ENCODE measurements at regions of chr9 and their contacts with region 1.

Region 1: GRCh38 chr9:86413966-86414880 is 60.0 kb upstream of the TUT7 start:
- DNase-seq: no peak
- ATAC-seq: no peak
- H3K4me3 Mint-ChIP-seq: no peak overlapping the region
- H3K27ac Mint-ChIP-seq: no peak overlapping the region
- H3K4me1 Mint-ChIP-seq: no peaks in the 10 kb centered on the region
- H3K27me3 Mint-ChIP-seq: peaks cover 14% of the 10 kb centered on the region

Region 2: GRCh38 chr9:85740787-85741094 is 673.5 kb before region 1 on chr9:
- CTCF ChIA-PET with region 1: no interaction called
- POLR2A ChIA-PET with region 1: no interaction called
- intact Hi-C with region 1: no loop called
- DNase-seq: no peak
- ATAC-seq: no peak
- H3K4me3 Mint-ChIP-seq: peak overlapping the region; percentile 86
- H3K27ac Mint-ChIP-seq: peak overlapping the region; percentile 96
- H3K4me1 Mint-ChIP-seq: peaks cover 38% of the 10 kb centered on the region
- H3K27me3 Mint-ChIP-seq: peaks cover 2% of the 10 kb centered on the region

Region 3: GRCh38 chr9:86424251-86424891 is 10.1 kb after region 1 on chr9:
- CTCF ChIA-PET with region 1: interaction called, 11 read pairs
- POLR2A ChIA-PET with region 1: no interaction called
- intact Hi-C with region 1: no loop called
- DNase-seq: no peak
- ATAC-seq: no peak
- H3K4me3 Mint-ChIP-seq: no peak overlapping the region
- H3K27ac Mint-ChIP-seq: no peak overlapping the region
- H3K4me1 Mint-ChIP-seq: no peaks in the 10 kb centered on the region
- H3K27me3 Mint-ChIP-seq: peaks cover 8% of the 10 kb centered on the region

Region 4: DNA sequence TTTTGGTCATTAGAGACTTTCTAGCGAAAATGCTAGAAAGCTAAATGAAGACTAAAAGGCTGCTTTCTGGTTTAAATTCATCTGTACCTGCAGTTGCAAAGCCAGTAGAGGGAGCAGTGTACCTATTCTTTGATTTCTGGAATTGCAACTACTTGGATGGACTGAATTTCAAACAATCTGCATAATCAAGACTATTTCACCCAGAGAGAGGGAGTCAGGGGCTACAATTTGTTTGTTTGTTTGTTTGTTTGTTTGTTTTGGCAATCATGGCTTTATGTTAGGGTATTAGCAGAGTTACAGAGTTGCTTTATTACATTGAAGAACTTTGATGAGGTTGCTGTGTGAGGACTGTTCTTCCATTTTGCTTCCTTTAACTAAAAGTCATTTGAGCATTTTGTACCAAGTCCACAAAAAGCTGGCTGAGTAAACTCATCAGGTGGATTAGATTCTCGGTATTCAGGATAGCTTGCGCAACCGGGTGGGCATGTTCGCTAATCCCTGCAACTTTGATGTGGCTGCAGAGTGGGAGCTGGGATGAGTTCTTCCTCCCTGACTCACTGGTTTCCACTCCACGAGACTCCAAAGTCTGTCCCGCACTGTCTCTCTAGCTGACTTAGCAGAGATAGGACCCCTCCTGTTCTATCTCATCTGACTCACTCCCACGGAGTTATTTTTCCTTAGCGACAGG is 20.0 kb after region 1 on chr9:
- CTCF ChIA-PET with region 1: interaction called, 13 read pairs
- POLR2A ChIA-PET with region 1: no interaction called
- intact Hi-C with region 1: no loop called
- DNase-seq: no peak
- ATAC-seq: no peak
- H3K4me3 Mint-ChIP-seq: no peak overlapping the region
- H3K27ac Mint-ChIP-seq: no peak overlapping the region
- H3K4me1 Mint-ChIP-seq: no peaks in the 10 kb centered on the region
- H3K27me3 Mint-ChIP-seq: peaks cover 13% of the 10 kb centered on the region

Region 5: GRCh38 chr9:86486891-86487837 is 72.9 kb after region 1 on chr9:
- CTCF ChIA-PET with region 1: interaction called, 3 read pairs
- POLR2A ChIA-PET with region 1: no interaction called
- intact Hi-C with region 1: loop called in 1 of 2 experiments (anchors 5 kb)
- DNase-seq: no peak
- ATAC-seq: no peak
- H3K4me3 Mint-ChIP-seq: no peak overlapping the region
- H3K27ac Mint-ChIP-seq: no peak overlapping the region
- H3K4me1 Mint-ChIP-seq: peaks cover 7% of the 10 kb centered on the region
- H3K27me3 Mint-ChIP-seq: no peaks in the 10 kb centered on the region

Region 6: GRCh38 chr9:86575825-86576525 is 161.8 kb after region 1 on chr9:
- CTCF ChIA-PET with region 1: no interaction called
- POLR2A ChIA-PET with region 1: no interaction called
- intact Hi-C with region 1: no loop called
- DNase-seq: no peak
- ATAC-seq: no peak
- H3K4me3 Mint-ChIP-seq: no peak overlapping the region
- H3K27ac Mint-ChIP-seq: no peak overlapping the region
- H3K4me1 Mint-ChIP-seq: no peaks in the 10 kb centered on the region
- H3K27me3 Mint-ChIP-seq: peaks cover 10% of the 10 kb centered on the region

Region 7: DNA sequence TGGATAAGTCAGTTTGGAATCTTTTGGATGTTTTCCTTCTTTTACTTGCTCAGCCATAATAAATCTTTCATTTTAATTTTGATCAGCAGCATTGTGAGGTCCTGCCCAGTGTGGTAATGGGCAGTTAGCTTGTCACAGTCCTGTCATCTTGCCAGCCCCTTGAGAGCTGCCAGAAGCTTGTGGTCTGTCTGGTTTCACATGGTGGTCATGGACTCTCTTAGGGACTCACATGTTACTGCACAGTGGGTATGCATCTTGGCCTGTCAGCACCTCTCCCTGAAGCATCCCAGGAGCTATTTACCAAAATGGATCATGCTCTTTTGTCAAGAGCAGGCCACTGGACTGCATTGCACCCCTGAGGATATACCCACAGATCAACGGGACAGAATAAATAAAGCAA is 1143.8 kb after region 1 on chr9:
- CTCF ChIA-PET with region 1: no interaction called
- POLR2A ChIA-PET with region 1: no interaction called
- intact Hi-C with region 1: no loop called
- DNase-seq: no peak
- ATAC-seq: no peak
- H3K4me3 Mint-ChIP-seq: no peak overlapping the region
- H3K27ac Mint-ChIP-seq: no peak overlapping the region
- H3K4me1 Mint-ChIP-seq: peaks cover 4% of the 10 kb centered on the region
- H3K27me3 Mint-ChIP-seq: no peaks in the 10 kb centered on the region

Measured in activated CD4-positive, alpha-beta T cell treated with anti-CD3 and anti-CD28 coated beads for 36 hours (primary cell).